Activated T-helper 1 cell treated with anti-CD3 and anti-CD28 coated beads, Interleukin-12 subunit alpha, Interleukin-12 subunit beta, Interleukin-2, Interleukin-4 antibody, amounts not matched to agents 30 ng/mL and 10 ng/mL and 1 ng/mL, durations not matched to agents 14 hours and 24 hours and 36 hours (primary cell): ENCODE measurements at regions of chr5 and their contacts with region 1.

Region 1: DNA sequence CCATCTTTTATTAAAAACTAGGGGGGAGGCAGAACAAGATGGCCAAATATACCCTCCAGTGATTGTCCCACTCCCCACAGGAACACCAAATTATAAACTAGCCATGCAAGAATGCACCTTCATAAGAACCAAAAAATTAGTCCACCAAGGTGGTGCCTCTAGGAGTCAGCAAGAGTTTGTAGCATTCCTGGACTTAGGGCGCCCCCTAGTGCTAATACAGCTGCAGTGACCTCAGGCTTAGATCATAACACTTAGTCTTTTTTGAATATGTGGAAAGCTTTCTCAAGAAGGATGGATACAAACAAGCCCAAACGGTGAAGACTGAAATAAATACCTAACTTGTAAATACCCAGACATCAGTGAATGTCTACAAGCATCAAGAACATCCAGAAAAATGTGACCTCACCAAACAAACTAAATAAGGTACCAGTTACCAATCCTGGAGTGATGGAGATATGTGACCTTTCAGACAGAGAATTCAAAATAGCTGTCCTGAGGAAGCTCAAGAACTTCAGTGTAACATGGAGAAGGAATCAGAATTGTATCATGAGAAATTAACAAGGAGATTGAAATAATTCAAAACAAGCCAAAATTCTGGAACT is 19.3 kb downstream of the PPIP5K2 start:
- DNase-seq: peak; percentile 61
- H3K4me3 Mint-ChIP-seq: no peak overlapping the region
- H3K27ac Mint-ChIP-seq: no peak overlapping the region
- H3K4me1 Mint-ChIP-seq: peaks cover 5% of the 10 kb centered on the region
- H3K27me3 Mint-ChIP-seq: no peaks in the 10 kb centered on the region

Region 2: GRCh38 chr5:102536323-102536928 is 602.9 kb before region 1 on chr5:
- intact Hi-C with region 1: loop called (anchors 1 kb)
- DNase-seq: no peak
- H3K4me3 Mint-ChIP-seq: no peak overlapping the region
- H3K27ac Mint-ChIP-seq: no peak overlapping the region
- H3K4me1 Mint-ChIP-seq: no peaks in the 10 kb centered on the region
- H3K27me3 Mint-ChIP-seq: no peaks in the 10 kb centered on the region

Region 3: DNA sequence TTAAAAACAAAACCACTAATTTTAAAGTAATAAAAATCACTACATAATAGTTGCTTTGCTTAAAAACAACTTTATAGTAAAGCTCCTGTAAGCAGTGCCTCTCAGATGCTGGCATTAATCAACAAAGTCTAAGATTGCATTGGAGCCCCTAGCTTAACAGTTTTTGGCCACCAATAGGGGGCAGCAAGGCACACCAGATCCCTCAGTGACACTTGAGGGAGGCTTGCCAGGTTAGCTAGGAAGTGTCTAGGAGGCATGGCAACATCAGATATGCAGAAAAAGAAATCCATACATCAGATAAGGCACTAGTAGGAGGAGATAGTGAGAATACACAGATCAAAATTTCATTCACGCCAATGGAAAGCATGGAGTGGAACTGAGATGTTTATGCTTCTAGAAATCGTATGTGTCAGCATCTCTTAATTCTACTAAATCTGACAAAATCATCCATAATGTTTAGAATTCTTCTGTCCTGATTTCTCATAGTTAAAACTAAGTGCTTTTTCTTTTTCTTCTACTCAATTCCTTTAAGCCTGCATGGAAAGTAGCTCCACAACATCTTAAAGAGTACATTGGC is 457.9 kb before region 1 on chr5:
- intact Hi-C with region 1: loop called (anchors 1 kb)
- DNase-seq: peak; percentile 29
- H3K4me3 Mint-ChIP-seq: no peak overlapping the region
- H3K27ac Mint-ChIP-seq: no peak overlapping the region
- H3K4me1 Mint-ChIP-seq: no peaks in the 10 kb centered on the region
- H3K27me3 Mint-ChIP-seq: peaks cover 5% of the 10 kb centered on the region

Region 4: DNA sequence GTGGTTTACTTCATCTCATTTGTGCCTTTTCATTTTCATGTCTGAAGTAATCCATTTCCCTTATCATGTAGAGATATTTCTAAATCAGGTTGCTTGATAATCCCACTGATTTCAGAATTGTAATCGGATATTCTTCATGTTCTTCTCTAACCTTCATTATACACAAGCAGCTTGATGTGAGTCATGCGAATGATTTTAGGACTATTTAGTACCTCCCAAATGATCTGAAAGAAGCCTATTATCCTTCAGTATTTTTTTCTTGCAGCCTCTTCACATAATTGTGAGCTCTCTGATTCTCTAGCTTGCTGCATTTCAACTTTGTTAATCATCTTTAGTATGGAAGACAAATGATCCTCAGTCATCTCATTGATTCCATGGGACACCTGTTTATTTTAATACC is 201.4 kb before region 1 on chr5:
- intact Hi-C with region 1: loop called (anchors 5 kb)
- DNase-seq: no peak
- H3K4me3 Mint-ChIP-seq: no peak overlapping the region
- H3K27ac Mint-ChIP-seq: no peak overlapping the region
- H3K4me1 Mint-ChIP-seq: peaks cover 16% of the 10 kb centered on the region
- H3K27me3 Mint-ChIP-seq: no peaks in the 10 kb centered on the region

Region 5: DNA sequence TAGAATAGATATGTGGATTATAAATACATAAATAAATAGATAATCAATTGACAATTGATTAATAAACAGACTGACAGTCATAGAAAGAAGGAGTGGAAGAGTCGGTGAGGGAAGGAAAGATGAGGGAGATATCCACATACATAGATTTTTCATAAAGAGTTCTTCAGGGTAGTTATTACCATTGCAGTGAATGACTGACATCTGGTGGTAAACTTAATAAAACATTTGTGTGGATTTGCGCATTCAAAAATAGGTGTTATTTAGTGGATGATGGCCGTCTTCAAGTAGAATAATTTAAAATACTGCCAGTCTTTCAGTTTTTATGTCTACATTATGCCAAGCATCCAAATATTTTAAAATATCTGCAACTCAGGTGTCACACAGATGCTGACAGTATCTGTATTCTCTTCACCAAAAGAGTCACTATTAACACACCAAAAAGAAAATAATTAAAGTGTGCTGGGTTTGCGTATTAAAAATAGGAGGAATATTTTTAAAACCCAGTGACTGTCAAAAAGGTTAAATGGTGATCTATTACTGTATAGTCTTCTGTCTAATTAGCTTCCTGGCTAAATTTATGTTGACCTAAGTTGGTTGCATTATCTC is 98.2 kb before region 1 on chr5:
- intact Hi-C with region 1: loop called (anchors 2 kb)
- DNase-seq: no peak
- H3K4me3 Mint-ChIP-seq: no peak overlapping the region
- H3K27ac Mint-ChIP-seq: no peak overlapping the region
- H3K4me1 Mint-ChIP-seq: no peaks in the 10 kb centered on the region
- H3K27me3 Mint-ChIP-seq: peaks cover 14% of the 10 kb centered on the region

Region 6: GRCh38 chr5:103151156-103151555 is 11.8 kb after region 1 on chr5:
- intact Hi-C with region 1: no loop called
- DNase-seq: no peak
- H3K4me3 Mint-ChIP-seq: no peak overlapping the region
- H3K27ac Mint-ChIP-seq: no peak overlapping the region
- H3K4me1 Mint-ChIP-seq: no peaks in the 10 kb centered on the region
- H3K27me3 Mint-ChIP-seq: no peaks in the 10 kb centered on the region

Region 7: DNA sequence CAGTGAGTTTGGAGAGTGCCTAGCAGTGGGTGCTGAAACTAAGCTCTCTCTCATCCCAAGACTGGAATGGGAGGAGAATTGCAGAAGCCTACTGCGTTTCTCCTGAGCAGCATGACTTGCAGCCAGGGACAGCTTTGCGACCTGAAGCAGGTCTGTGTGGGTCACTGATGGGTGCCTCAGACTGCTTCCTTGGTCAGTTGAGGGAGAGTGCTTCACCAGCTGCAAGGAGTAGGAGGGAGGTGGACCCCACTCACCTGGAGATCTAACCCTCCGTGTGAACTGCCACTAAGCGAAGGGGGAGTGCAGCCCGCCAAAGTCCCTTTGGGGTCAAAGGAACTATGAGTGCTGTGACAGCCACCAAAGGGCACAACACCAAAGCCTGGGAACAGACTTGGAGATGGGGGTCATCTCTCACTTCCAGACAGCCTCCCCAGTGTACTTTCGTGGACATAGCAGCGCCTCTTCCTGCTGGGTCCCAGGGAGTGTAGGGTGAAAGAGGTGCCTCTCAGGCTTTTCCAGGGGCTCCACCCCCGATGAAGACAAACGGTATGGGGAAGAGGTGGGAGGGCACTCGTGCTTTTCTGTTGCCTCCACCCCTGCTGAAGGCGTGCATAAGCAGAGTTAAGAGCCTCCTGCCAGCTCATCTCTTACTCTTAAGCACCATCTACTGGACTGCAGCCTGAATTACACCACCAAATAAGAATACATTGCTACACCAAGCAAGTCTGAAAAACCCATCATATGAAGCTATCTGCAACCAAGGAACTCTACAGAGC is 84.9 kb after region 1 on chr5:
- intact Hi-C with region 1: loop called (anchors 1 kb)
- DNase-seq: peak; percentile 24
- H3K4me3 Mint-ChIP-seq: no peak overlapping the region
- H3K27ac Mint-ChIP-seq: no peak overlapping the region
- H3K4me1 Mint-ChIP-seq: no peaks in the 10 kb centered on the region
- H3K27me3 Mint-ChIP-seq: peaks cover 23% of the 10 kb centered on the region